Transverse colon (tissue), 4 donors: ENCODE measurements at regions of chr16 and their contacts with region 1.

Region 1: DNA sequence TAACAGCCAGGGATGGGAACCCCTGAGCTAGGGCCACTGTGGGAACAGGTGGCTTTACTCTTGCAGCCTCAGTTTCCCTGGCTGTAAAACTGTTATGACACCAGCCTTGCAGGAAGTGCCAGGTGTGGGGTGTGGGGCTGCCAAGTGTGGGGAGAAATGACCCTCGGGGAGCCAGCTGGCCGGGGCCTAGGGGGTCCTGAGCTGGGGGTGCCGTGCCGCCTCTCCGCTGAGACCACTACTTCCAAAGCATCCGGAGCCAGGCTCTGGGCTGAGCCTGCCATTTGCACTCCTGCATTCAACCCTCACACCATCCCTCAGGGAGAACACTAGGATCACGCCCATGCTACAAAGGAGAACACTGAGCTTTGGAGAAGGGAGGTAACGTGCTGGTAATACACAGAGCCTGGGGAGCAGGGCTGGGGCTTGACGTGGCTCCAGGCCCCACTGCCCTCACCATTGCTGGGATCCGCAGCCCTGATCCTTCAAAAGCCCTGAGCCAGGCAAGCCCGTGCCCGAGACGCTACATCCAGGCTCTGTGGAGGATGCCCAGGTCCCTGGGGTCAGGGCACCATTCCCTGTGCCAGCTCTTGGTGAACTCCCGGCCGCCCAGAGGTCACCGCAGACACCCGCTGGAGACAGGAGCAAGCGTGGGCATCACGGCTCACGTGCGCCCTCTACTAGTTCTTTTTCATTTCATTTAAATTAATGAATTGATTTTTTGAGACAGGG is 28.8 kb upstream of the GINS2 start:
- DNase-seq: peak; percentile 72
- H3K4me3 ChIP-seq: no peak overlapping the region
- H3K27ac ChIP-seq: no peak overlapping the region
- H3K4me1 ChIP-seq: peaks cover 0 to 19% (median 3%) of the 10 kb centered on the region in 4 donors
- H3K27me3 ChIP-seq: no peaks in the 10 kb centered on the region
- CTCF ChIP-seq: peak; percentile 80 to 86 (median 82)
- EP300 ChIP-seq: no peak
- POLR2A ChIP-seq: no peak

Region 2: GRCh38 chr16:85114909-85115567 is 602.5 kb before region 1 on chr16:
- in situ Hi-C with region 1: no loop called
- intact Hi-C with region 1: loop called (anchors 10 kb)
- DNase-seq: peak; percentile 93
- H3K4me3 ChIP-seq: peak overlapping the region in 2 of 4 donors; percentile 27 to 44
- H3K27ac ChIP-seq: peak overlapping the region; percentile 49 to 75 (median 62)
- H3K4me1 ChIP-seq: peaks cover 3 to 8% (median 8%) of the 10 kb centered on the region in 4 donors
- H3K27me3 ChIP-seq: no peaks in the 10 kb centered on the region
- CTCF ChIP-seq: peak; percentile 95 to 98 (median 96)
- EP300 ChIP-seq: no peak
- POLR2A ChIP-seq: no peak

Region 3: DNA sequence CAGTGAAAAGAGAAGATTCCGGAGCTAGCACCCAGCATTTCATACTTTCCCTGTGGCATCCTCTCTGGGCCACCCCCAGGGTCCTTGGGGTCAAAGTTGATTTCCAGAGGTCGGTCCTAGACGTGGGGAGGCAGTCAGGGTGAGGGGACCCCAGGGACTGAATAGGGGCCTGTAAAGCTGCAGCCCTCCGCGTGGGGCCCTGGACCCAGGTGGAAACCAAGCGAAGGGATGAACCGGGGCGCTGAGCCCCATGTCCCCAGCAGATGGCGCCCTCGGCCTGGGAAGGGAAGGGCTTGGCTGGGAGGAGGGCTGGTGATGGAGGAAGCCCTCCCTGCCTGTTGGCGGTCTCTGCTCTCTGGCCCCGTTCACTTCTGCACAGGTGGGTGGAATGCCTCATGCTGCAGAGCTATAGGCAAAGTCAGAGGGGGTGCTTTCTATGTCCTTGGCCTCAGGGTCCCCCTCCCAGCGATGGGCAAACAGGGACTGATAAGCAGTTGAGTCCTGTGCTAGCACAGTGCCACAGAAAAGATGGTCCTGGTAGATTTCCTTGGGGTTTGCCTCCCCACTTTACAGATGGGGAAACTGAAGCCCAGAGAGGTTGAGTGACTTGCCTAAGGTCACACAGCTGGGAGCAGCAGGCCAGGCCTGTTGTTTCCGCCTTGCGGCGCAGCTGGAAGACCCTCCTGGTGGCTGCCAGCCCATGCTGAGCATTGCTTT is 441.9 kb before region 1 on chr16:
- in situ Hi-C with region 1: loop called in 1 of 4 experiments (anchors 25 kb)
- intact Hi-C with region 1: loop called (anchors 10 kb)
- DNase-seq: peak; percentile 75
- H3K4me3 ChIP-seq: no peak overlapping the region
- H3K27ac ChIP-seq: no peak overlapping the region
- H3K4me1 ChIP-seq: no peaks in the 10 kb centered on the region
- H3K27me3 ChIP-seq: no peaks in the 10 kb centered on the region
- CTCF ChIP-seq: peak; percentile 79 to 90 (median 88)
- EP300 ChIP-seq: no peak
- POLR2A ChIP-seq: no peak

Region 4: DNA sequence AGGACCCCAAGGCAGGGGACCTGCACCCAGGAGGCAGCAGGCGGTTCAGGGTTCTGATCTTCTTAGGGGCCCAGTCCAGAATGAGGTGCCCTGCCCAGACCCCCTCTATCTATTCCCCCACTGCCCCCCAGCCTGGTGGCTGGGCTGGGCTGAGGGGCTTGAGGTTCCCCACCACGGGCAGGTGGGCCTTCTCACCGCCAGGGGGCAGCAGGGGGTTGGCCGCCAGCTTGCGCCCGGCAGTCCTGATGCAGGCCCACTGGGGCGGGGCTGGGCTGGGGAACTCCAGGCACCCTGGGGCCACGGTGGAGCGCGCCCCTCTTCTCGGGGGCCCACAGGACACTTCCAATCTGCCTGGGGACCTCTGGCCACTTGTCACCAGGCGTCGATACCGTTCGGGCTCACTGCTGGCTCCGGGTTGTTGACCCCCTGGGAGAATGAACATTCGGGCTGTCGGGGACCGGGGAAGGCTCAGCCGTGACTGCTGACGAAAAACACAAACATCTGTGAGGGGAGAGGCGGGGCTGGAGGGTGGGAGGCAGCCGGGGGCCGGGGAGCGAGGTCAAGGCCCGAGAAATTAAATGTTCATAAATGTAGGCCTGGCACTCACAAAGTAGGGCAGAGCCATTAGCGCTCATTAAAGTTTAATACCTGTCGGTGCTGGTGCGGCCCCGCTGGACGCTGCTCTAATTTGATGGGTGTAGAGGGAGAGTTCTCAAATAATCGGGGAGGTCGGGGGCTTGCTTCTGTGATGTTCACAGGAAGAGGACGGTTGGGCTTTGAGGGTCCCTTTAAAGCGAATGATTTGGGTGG is 323.7 kb before region 1 on chr16:
- in situ Hi-C with region 1: no loop called
- intact Hi-C with region 1: loop called (anchors 10 kb)
- DNase-seq: peak; percentile 73
- H3K4me3 ChIP-seq: no peak overlapping the region
- H3K27ac ChIP-seq: peak overlapping the region; percentile 57 to 85 (median 74)
- H3K4me1 ChIP-seq: peaks cover 25 to 53% (median 37%) of the 10 kb centered on the region in 4 donors
- H3K27me3 ChIP-seq: no peaks in the 10 kb centered on the region
- CTCF ChIP-seq: peak; percentile 86 to 94 (median 93)
- EP300 ChIP-seq: no peak
- POLR2A ChIP-seq: no peak

Region 5: GRCh38 chr16:85420501-85421337 is 296.8 kb before region 1 on chr16:
- in situ Hi-C with region 1: loop called in 1 of 4 experiments (anchors 25 kb)
- intact Hi-C with region 1: no loop called
- DNase-seq: peak; percentile 75
- H3K4me3 ChIP-seq: no peak overlapping the region
- H3K27ac ChIP-seq: peak overlapping the region in 3 of 4 donors; percentile 43 to 74 (median 52)
- H3K4me1 ChIP-seq: peaks cover 13 to 45% (median 36%) of the 10 kb centered on the region in 4 donors
- H3K27me3 ChIP-seq: no peaks in the 10 kb centered on the region
- CTCF ChIP-seq: peak; percentile 97 to 100 (median 100)
- EP300 ChIP-seq: no peak
- POLR2A ChIP-seq: no peak

Region 6: GRCh38 chr16:85615852-85616606 is 101.5 kb before region 1 on chr16:
- in situ Hi-C with region 1: no loop called
- intact Hi-C with region 1: loop called (anchors 2 kb)
- DNase-seq: peak; percentile 83
- H3K4me3 ChIP-seq: peak overlapping the region in 1 of 4 donors; percentile 62
- H3K27ac ChIP-seq: peak overlapping the region; percentile 89 to 98 (median 94)
- H3K4me1 ChIP-seq: peaks cover 30 to 64% (median 54%) of the 10 kb centered on the region in 4 donors
- H3K27me3 ChIP-seq: no peaks in the 10 kb centered on the region
- CTCF ChIP-seq: peak; percentile 77 to 92 (median 85)
- EP300 ChIP-seq: no peak
- POLR2A ChIP-seq: no peak

Region 7: DNA sequence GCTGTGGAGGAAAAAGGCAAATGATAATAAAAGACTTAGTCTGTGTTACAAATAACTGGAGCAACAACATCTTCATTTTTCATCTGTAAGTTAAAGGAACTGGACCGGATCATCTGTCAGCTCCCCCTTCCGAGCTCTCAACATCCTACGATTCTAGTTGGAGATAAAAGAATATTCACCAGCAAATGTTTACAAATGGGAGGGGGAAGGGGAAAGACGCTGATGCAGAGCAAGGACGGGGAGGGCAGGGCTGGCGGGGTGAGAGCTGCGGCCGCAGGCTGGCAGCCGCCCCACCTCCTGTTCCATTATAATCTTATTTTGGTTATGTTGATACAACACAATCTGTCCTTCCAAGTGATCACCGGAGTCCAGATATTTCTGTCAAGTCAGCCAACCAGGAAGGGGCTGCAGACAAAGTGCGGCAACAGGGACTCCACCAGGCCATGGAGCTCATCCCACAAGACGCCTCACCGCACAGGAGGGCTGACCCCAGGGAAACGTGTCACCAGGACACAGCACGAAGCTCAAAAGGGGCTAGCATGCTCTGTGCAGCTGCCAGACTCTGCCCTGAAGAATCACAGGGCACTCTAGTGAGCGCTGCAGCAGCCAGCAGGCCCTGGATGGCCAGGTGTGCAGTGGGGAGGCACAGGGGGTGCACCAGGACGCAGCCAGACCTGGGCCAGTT is 1646.4 kb after region 1 on chr16:
- in situ Hi-C with region 1: no loop called
- intact Hi-C with region 1: loop called (anchors 5 kb)
- DNase-seq: peak; percentile 33
- H3K4me3 ChIP-seq: no peak overlapping the region
- H3K27ac ChIP-seq: peak overlapping the region; percentile 43 to 81 (median 78)
- H3K4me1 ChIP-seq: peaks cover 4 to 49% (median 24%) of the 10 kb centered on the region in 4 donors
- H3K27me3 ChIP-seq: no peaks in the 10 kb centered on the region
- CTCF ChIP-seq: no peak
- EP300 ChIP-seq: no peak
- POLR2A ChIP-seq: no peak